Adrenal gland (tissue), 19 donors: ENCODE measurements at regions of chr2 and their contacts with region 1.

Region 1: DNA sequence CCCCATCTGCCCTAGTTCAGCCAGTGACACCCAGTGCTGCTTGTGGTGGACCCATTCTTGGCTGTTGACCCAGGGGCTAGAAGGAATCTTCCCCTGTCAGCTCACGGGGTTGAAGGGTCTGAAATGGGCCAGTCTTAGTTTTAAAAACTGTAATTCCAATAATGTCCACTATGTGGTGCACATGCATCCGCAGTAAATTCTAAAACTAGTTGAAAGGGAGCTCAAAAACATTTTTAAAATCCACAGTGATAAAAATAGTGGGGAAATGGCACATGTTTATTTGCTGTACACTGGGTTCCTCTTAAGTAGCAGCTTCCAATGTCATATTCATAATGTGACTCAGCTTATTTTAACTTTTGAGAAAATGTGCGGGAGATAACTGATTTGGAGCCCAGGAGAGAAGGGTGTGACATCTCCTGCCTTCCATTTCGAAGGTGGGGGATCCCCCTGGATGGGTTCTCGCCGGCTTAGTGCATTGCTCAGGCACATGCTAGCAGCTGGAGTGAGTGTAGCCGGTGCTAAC is 32.8 kb downstream of the GRHL1 start:
- DNase-seq: peak in 1 of 7 donors; percentile 31
- H3K4me3 ChIP-seq: peak overlapping the region in 1 of 4 donors; percentile 26
- H3K27ac ChIP-seq: peak overlapping the region in 1 of 5 donors; percentile 75
- H3K4me1 ChIP-seq: peaks cover 0 to 19% of the 10 kb centered on the region in 2 donors
- H3K27me3 ChIP-seq: no peaks in the 10 kb centered on the region
- CTCF ChIP-seq: peak; percentile 82 to 90 (median 86)
- POLR2A ChIP-seq: no peak

Region 2: GRCh38 chr2:10030311-10030736 is 46.0 kb after region 1 on chr2:
- intact Hi-C with region 1: loop called in 1 of 2 experiments (anchors 5 kb)
- DNase-seq: no peak
- H3K4me3 ChIP-seq: no peak overlapping the region
- H3K27ac ChIP-seq: no peak overlapping the region
- H3K4me1 ChIP-seq: peaks cover 12 to 13% of the 10 kb centered on the region in 2 donors
- H3K27me3 ChIP-seq: no peaks in the 10 kb centered on the region
- CTCF ChIP-seq: no peak
- POLR2A ChIP-seq: no peak

Region 3: DNA sequence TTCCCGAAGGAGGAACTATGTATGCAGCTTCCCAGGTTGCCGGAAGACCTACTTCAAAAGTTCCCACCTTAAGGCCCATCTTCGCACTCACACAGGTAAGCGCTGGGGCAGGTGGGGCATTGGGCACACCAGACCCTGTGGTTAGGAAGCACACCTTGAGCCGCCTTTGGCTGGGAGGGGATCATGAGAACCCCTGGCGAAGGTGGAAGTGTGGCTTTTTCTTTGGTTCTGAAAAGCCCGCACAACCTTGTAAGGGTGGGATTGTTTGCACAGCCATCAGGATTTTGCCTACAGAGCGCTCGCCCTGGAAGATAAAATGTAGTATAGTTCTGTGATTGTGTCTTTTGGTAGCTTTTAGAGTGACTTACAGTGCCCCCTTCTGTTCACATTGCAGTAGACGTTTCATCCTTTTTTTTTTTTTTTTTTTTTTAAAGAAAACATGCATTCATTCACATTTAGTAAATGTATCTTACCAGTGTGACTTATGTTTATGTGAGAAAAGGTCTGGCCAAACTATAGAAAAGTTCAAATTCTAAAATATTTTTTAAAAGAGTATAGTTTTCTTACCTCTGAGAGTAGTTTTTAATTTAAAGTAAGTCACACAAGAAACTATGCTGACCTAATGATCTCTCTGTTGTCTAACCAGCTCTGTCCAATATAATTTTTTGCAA is 64.4 kb after region 1 on chr2:
- intact Hi-C with region 1: loop called (anchors 2 to 5 kb)
- DNase-seq: peak in 1 of 7 donors; percentile 43
- H3K4me3 ChIP-seq: no peak overlapping the region
- H3K27ac ChIP-seq: peak overlapping the region in 2 of 5 donors; percentile 44
- H3K4me1 ChIP-seq: peaks cover 16 to 32% of the 10 kb centered on the region in 2 donors
- H3K27me3 ChIP-seq: no peaks in the 10 kb centered on the region
- CTCF ChIP-seq: peak; percentile 33 to 87 (median 63)
- POLR2A ChIP-seq: no peak